AG04450 (cell line): ENCODE measurements at regions of chr7 and their contacts with region 1.

Region 1: GRCh38 chr7:74206589-74207120 is 3.2 kb upstream of the LAT2 start:
- DNase-seq: peak; percentile 21
- H3K4me3 ChIP-seq: 0 out of 2 replicates have a peak overlapping the region, but pooled peaks have one; percentile 25
- H3K27ac ChIP-seq: no peak overlapping the region
- H3K27me3 ChIP-seq: no peaks in the 10 kb centered on the region
- CTCF ChIP-seq: peak; percentile 92

Region 2: GRCh38 chr7:73971704-73972341 is 234.8 kb before region 1 on chr7:
- CTCF ChIA-PET with region 1: no interaction called
- POLR2A ChIA-PET with region 1: no interaction called
- DNase-seq: no peak
- H3K4me3 ChIP-seq: no peak overlapping the region
- H3K27ac ChIP-seq: no peak overlapping the region
- H3K27me3 ChIP-seq: peaks cover 9% of the 10 kb centered on the region
- CTCF ChIP-seq: peak; percentile 20; the same call in 1 of the 2 replicates

Region 3: DNA sequence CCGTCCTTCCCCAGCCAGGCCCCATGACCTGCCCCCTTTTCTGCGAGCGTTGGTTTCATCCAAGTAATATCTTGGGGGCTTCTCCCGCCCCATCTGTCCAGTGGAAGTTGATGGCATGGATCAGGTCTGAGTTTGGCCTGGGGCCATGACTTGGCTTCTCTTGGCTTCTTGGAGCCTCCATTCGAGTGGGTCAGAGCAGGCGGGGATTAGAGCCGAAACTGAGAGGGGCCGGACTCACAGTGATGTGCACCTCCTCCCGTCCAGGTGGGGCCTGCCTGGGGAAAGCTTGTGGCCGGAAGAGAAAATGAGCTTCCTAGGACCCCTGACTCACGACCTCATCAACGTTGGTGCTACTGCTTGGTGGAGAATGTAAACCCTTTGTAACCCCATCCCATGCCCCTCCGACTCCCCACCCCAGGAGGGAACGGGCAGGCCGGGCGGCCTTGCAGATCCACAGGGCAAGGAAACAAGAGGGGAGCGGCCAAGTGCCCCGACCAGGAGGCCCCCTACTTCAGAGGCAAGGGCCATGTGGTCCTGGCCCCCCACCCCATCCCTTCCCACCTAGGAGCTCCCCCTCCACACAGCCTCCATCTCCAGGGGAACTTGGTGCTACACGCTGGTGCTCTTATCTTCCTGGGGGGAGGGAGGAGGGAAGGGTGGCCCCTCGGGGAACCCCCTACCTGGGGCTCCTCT is 138.1 kb before region 1 on chr7:
- CTCF ChIA-PET with region 1: interaction called, 12 read pairs
- POLR2A ChIA-PET with region 1: no interaction called
- DNase-seq: no peak
- H3K4me3 ChIP-seq: no peak overlapping the region
- H3K27ac ChIP-seq: no peak overlapping the region
- H3K27me3 ChIP-seq: no peaks in the 10 kb centered on the region
- CTCF ChIP-seq: no peak

Region 4: DNA sequence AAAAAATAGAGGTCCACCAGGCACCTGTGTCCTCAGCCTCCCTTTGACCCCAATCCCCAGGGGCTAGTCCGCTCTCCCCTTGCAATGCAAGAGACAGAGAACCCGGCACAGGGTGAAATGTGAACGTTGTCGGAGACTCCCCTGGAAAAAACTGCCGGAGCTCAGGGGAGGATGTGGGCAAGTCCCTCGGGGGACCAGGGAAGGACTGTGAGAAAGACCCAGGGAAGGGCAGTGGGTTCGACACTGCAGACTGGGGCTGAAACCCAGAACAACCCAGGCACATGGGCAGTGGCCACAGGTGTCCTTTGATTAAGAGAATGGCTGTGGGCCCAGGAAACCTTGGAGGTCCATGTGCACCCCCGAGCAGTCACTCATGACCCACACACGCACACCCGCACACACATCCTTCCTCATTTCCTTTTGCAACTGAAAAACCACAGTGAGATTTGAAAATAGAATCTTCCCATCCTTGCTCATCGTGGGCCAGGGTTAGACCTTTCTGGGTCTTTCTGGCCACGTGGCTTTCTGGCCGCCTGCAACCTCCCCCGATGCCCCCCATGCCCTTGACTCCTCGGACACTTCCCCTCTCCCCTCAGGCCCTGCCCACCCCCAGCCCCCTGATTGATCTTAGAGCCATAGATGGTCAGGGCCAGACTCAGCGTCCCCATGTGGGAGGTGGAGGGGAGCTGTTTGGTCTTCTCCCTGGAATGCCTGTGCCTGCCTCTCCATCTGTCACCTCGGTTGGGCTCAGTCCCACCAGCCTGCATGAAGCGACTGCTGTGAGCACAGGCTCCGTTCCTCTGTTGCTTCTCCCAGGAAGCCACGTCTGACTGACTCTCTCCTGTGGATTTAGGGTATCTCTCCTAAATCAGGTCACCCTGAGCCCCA is 11.0 kb after region 1 on chr7:
- CTCF ChIA-PET with region 1: interaction called, 12 read pairs
- POLR2A ChIA-PET with region 1: no interaction called
- DNase-seq: no peak
- H3K4me3 ChIP-seq: no peak overlapping the region
- H3K27ac ChIP-seq: no peak overlapping the region
- H3K27me3 ChIP-seq: no peaks in the 10 kb centered on the region
- CTCF ChIP-seq: no peak

Region 5: GRCh38 chr7:74302745-74303221 is 96.1 kb after region 1 on chr7:
- CTCF ChIA-PET with region 1: no interaction called
- POLR2A ChIA-PET with region 1: no interaction called
- DNase-seq: no peak
- H3K4me3 ChIP-seq: no peak overlapping the region
- H3K27ac ChIP-seq: no peak overlapping the region
- H3K27me3 ChIP-seq: no peaks in the 10 kb centered on the region
- CTCF ChIP-seq: no peak

Region 6: GRCh38 chr7:74395745-74396311 is 189.2 kb after region 1 on chr7:
- CTCF ChIA-PET with region 1: interaction called, 168 read pairs
- POLR2A ChIA-PET with region 1: interaction called, 4 read pairs
- DNase-seq: no peak
- H3K4me3 ChIP-seq: no peak overlapping the region
- H3K27ac ChIP-seq: no peak overlapping the region
- H3K27me3 ChIP-seq: no peaks in the 10 kb centered on the region
- CTCF ChIP-seq: no peak

Region 7: GRCh38 chr7:75679060-75679459 is 1472.4 kb after region 1 on chr7:
- CTCF ChIA-PET with region 1: interaction called, 12 read pairs
- POLR2A ChIA-PET with region 1: no interaction called
- DNase-seq: no peak
- H3K4me3 ChIP-seq: no peak overlapping the region
- H3K27ac ChIP-seq: no peak overlapping the region
- H3K27me3 ChIP-seq: no peaks in the 10 kb centered on the region
- CTCF ChIP-seq: no peak